Activated CD4-positive, alpha-beta memory T cell treated with anti-CD3 and anti-CD28 coated beads for 36 hours (primary cell): ENCODE measurements at regions of chr18 and their contacts with region 1.

Region 1: GRCh38 chr18:54224379-54225014 is at the start of gene MBD2:
- DNase-seq: peak; percentile 96
- H3K4me3 Mint-ChIP-seq: peak within 1 kb of the TSS; percentile 88
- H3K27ac Mint-ChIP-seq: peak within 1 kb of the TSS; percentile 96
- H3K4me1 Mint-ChIP-seq: peaks cover 44% of the 10 kb centered on the region
- H3K27me3 Mint-ChIP-seq: no peaks in the 10 kb centered on the region
- total RNA-seq, gene MBD2: 131 to 140 TPM

Region 2: GRCh38 chr18:54163453-54163852 is 61.0 kb before region 1 on chr18:
- CTCF ChIA-PET with region 1: no interaction called
- POLR2A ChIA-PET with region 1: interaction called, 4 read pairs
- intact Hi-C with region 1: loop called (anchors 1 kb)
- DNase-seq: no peak
- H3K4me3 Mint-ChIP-seq: no peak overlapping the region
- H3K27ac Mint-ChIP-seq: peak overlapping the region; percentile 85
- H3K4me1 Mint-ChIP-seq: peaks cover 22% of the 10 kb centered on the region
- H3K27me3 Mint-ChIP-seq: no peaks in the 10 kb centered on the region

Region 3: DNA sequence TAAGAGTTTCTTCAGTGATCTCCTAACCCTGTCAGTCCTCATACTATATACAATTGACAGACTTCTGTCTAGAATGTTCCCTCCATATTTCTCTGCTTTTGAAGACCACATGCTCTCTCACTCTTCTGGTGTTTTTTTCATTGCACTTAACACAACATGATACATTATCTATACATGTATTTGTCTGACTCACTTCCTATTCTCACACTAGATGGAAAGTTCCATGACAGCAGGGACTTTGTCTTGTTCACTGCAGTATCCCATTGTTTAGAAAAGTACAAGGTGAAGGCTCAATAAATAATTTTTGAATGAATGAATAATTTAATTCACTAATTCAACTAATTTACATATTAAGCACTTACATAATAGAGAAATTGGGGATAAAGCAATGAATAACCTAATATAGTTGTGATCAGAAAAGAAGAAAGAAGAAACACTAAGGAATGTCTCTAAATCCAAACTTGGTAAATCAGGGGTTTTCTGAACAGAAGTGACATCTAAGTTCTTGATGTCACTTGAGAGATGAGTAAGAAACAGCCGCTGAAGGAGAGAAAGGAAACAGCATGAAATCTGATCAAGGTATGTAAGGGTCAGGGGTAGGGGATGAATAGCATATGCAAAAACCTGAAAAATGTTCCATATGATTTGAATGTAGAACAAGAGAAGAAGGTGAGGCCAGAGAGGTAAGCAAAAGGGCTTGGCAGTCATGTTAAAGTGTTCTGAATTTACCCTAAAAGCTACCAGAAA is 42.5 kb before region 1 on chr18:
- CTCF ChIA-PET with region 1: interaction called, 6 read pairs
- POLR2A ChIA-PET with region 1: interaction called, 3 read pairs
- intact Hi-C with region 1: loop called (anchors 1 kb)
- DNase-seq: no peak
- H3K4me3 Mint-ChIP-seq: no peak overlapping the region
- H3K27ac Mint-ChIP-seq: no peak overlapping the region
- H3K4me1 Mint-ChIP-seq: peaks cover 3% of the 10 kb centered on the region
- H3K27me3 Mint-ChIP-seq: no peaks in the 10 kb centered on the region

Region 4: GRCh38 chr18:54247511-54248175 is 23.1 kb after region 1 on chr18:
- CTCF ChIA-PET with region 1: interaction called, 12 read pairs
- POLR2A ChIA-PET with region 1: interaction called, 3 read pairs
- intact Hi-C with region 1: loop called (anchors 2 kb)
- DNase-seq: no peak
- H3K4me3 Mint-ChIP-seq: no peak overlapping the region
- H3K27ac Mint-ChIP-seq: peak overlapping the region; percentile 45
- H3K4me1 Mint-ChIP-seq: peaks cover 24% of the 10 kb centered on the region
- H3K27me3 Mint-ChIP-seq: peaks cover 2% of the 10 kb centered on the region

Region 5: DNA sequence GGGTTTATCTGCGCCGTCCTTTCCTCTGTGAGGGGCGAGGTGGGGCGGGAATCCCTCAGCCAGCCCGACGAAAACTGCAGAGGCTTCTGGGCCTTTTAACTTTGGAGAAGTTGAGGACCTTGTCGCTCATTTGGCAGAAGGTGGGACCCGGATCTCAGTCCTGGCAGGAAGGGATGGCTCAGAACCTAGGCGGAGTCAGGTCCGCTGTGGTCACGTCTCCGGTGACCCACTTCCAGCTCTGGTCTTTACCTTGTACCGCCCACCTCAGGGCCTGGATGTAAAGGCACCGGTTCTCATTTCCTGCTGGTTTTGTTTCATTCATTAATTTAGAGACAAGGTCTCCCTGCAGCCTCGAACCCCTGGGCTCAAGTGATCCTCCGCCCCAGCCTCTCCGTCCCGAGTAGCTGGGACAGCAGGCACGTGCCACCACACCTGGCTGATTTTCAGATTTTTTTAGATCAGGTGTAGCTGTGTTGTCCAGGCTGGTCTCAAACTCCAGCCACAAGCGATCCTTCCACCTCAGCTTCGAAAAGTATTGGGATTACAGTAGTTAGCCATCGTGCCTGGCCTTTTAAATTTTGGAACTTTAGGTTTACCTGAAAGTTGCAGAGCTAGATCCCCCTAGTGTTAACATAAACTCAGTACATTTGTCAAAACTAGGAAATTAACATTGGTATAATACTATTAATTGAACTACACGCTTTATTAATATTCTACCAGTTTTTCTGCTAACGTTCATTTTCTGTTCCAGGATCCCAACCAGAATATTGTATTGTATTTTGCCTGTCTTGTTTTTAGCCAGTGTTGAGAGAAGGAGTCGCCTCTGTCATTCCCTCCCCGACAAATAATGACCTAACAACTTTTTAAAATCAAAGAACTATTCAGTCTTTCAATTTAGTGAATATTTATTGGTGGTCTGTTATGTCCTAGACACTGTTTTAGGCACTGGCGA is 45.7 kb after region 1 on chr18:
- CTCF ChIA-PET with region 1: interaction called, 70 read pairs
- POLR2A ChIA-PET with region 1: interaction called, 18 read pairs
- intact Hi-C with region 1: loop called (anchors 1 kb)
- DNase-seq: peak; percentile 78
- H3K4me3 Mint-ChIP-seq: peak overlapping the region; percentile 78
- H3K27ac Mint-ChIP-seq: peak overlapping the region; percentile 94
- H3K4me1 Mint-ChIP-seq: peaks cover 29% of the 10 kb centered on the region
- H3K27me3 Mint-ChIP-seq: no peaks in the 10 kb centered on the region

Region 6: DNA sequence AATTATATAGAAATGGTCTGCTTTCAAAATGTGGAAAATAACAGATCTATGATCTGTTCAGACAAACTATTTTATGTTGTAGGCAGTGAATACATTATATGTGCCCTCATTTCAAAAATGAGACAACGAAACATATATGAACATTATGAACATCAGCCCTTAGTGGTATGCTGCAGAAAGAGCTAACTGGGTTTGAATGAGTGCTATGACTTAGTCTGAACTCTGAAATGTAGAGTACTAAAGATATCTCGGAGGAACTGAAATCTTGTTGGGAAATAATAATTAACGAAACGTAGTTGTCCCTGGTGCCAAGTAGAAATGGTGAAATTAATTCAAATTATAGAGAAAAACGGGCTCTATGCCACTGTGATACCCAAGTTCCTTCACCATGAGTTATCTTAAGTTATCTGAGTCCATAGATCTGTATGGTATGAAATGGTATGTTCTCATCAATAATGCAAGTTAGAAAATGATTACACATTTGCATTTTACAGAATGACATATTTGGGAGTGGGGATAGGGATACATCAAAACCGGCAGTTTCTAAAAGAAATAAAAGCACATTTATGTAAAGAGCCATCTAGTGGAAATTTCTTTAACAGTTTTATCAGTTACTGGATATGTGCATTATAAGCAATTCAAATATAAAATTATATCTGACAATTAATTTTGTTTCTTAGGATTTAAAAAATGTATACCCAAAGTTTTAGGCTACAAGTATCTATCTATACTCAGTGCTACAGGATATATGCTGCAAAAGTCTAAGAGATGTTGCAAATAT is 106.5 kb after region 1 on chr18:
- CTCF ChIA-PET with region 1: interaction called, 3 read pairs
- POLR2A ChIA-PET with region 1: no interaction called
- intact Hi-C with region 1: loop called (anchors 1 kb)
- DNase-seq: no peak
- H3K4me3 Mint-ChIP-seq: no peak overlapping the region
- H3K27ac Mint-ChIP-seq: no peak overlapping the region
- H3K4me1 Mint-ChIP-seq: peaks cover 5% of the 10 kb centered on the region
- H3K27me3 Mint-ChIP-seq: peaks cover 5% of the 10 kb centered on the region

Region 7: GRCh38 chr18:54392543-54393023 is 168.1 kb after region 1 on chr18:
- CTCF ChIA-PET with region 1: interaction called, 8 read pairs
- POLR2A ChIA-PET with region 1: no interaction called
- intact Hi-C with region 1: loop called (anchors 2 kb)
- DNase-seq: no peak
- H3K4me3 Mint-ChIP-seq: no peak overlapping the region
- H3K27ac Mint-ChIP-seq: no peak overlapping the region
- H3K4me1 Mint-ChIP-seq: peaks cover 17% of the 10 kb centered on the region
- H3K27me3 Mint-ChIP-seq: peaks cover 7% of the 10 kb centered on the region